Heart right ventricle (tissue), 16 donors: ENCODE measurements at regions of chr16 and their contacts with region 1.

Region 1: GRCh38 chr16:89641458-89642119 is 15.9 kb downstream of the CHMP1A start:
- DNase-seq: no peak
- ATAC-seq: no peak
- H3K4me3 ChIP-seq: peak overlapping the region in 4 of 10 donors; percentile 43 to 54 (median 52)
- H3K27ac ChIP-seq: no peak overlapping the region
- H3K4me1 ChIP-seq: peaks cover 0 to 22% (median 10%) of the 10 kb centered on the region in 9 donors
- H3K27me3 ChIP-seq: peaks cover 0 to 3% (median 0%) of the 10 kb centered on the region in 7 donors
- CTCF ChIP-seq: no peak

Region 2: GRCh38 chr16:89330177-89330856 is 311.3 kb before region 1 on chr16:
- intact Hi-C with region 1: loop called in 3 of 10 experiments (anchors 10 kb)
- DNase-seq: no peak
- ATAC-seq: peak in 6 of 8 donors; percentile 20 to 50 (median 34)
- H3K4me3 ChIP-seq: peak overlapping the region in 4 of 10 donors; percentile 7 to 18 (median 10)
- H3K27ac ChIP-seq: peak overlapping the region in 9 of 10 donors; percentile 13 to 78 (median 42)
- H3K4me1 ChIP-seq: peaks cover 32 to 93% (median 71%) of the 10 kb centered on the region in 9 donors
- H3K27me3 ChIP-seq: no peaks in the 10 kb centered on the region
- CTCF ChIP-seq: no peak

Region 3: GRCh38 chr16:89565506-89566372 is 75.8 kb before region 1 on chr16:
- intact Hi-C with region 1: loop called in 6 of 10 experiments (anchors 5 to 10 kb)
- DNase-seq: peak in 1 of 2 donors; percentile 58
- ATAC-seq: peak; percentile 6 to 61 (median 40)
- H3K4me3 ChIP-seq: peak overlapping the region in 9 of 10 donors; percentile 2 to 41 (median 25)
- H3K27ac ChIP-seq: peak overlapping the region in 1 of 10 donors; percentile 2
- H3K4me1 ChIP-seq: peaks cover 19 to 53% (median 45%) of the 10 kb centered on the region in 9 donors
- H3K27me3 ChIP-seq: peaks cover 6 to 26% (median 13%) of the 10 kb centered on the region in 7 donors
- CTCF ChIP-seq: peak in 8 of 9 donors; percentile 20 to 64 (median 52)

Region 4: DNA sequence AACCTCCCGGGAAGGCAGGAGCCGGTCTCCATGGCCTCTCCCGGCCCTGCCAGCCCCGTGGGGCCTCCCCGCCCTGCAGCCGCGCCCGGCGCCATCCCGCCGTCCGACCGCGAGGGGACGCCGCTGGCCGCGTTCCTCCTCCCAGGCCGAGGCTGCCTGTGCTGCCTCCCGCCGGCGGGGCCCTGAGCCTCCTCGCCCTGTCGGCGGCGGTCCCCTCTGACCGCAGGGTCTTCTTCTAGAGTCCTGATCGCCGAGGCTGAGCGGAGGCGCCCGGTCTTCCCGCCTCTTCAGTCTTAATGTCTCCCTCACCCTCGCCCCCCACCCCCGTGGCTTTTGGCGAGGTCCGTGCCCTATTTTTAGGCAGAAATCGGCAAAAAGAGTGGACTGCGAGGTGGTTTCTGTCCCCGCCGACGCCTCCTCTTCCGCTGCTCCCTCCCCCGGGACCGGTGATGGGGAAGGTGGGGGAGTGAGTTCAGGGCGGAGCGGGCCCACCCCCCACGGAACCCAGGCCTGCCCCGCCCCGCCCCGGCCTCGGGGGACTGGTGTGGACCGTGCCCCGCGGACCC is 66.8 kb before region 1 on chr16:
- intact Hi-C with region 1: loop called in 8 of 10 experiments (anchors 2 to 10 kb)
- DNase-seq: peak in 1 of 2 donors; percentile 51
- ATAC-seq: peak; percentile 44 to 71 (median 60)
- H3K4me3 ChIP-seq: peak overlapping the region in 9 of 10 donors; percentile 14 to 46 (median 36)
- H3K27ac ChIP-seq: no peak overlapping the region
- H3K4me1 ChIP-seq: peaks cover 11 to 22% (median 17%) of the 10 kb centered on the region in 9 donors
- H3K27me3 ChIP-seq: peaks cover 33 to 69% (median 62%) of the 10 kb centered on the region in 7 donors
- CTCF ChIP-seq: peak; percentile 19 to 80 (median 64)